ENCODE measurements at regions of chr1 and their contacts with region 1.

Region 1: GRCh38 chr1:31715087-31715872 is 11.5 kb upstream of the COL16A1 start:
- DNase-seq: peak in 2 of 3 donors; percentile 31 to 36
- H3K4me3 ChIP-seq: peak overlapping the region in 6 of 7 experiments; percentile 5 to 71 (median 52)
- H3K27ac ChIP-seq: no peak overlapping the region
- H3K4me1 ChIP-seq: peaks cover 0 to 24% (median 13%) of the 10 kb centered on the region in 4 experiments
- H3K27me3 ChIP-seq: peaks cover 0 to 41% (median 15%) of the 10 kb centered on the region in 5 experiments

Region 2: DNA sequence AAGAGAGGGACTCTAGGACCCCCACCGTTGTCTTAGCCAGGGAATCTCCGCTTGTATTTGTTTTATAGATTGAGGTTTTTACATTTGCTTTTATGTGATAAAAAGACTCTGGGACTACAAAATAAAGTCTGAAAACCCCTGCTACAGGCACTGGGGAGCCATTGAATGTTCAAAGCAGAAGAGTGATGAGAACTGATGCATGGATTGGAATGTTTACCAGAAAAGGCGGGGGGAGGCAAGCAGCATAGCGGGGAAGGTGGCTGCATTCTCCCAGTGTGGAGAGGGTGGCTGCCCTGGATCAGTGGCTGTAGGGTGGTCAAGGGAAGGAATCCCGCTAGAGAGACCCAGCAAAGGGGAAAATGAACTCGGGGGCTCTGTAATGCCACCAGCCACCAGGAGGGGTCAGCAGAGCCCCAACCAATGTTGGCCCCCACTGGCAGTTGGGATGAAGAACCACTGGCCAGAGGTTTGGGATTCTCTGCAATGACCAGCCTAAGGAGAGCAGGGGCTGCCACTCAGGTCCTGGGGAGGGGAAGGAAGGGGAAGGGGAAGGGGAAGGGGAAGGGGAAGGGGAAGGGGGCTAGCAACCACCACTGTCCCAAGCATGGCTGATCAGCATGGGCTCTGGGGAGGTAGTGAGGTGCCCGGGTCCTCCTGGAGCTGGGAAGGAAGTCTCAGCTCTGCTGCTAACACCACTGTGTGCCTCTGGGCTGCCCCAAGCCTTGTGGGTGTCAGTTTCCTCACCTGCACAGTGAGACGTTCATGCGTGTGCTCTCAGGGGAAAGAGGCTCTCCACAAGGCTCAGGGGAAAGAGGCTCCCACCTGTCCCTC is 51.4 kb before region 1 on chr1:
- CTCF ChIA-PET with region 1: interaction called, 84 read pairs
- POLR2A ChIA-PET with region 1: no interaction called
- DNase-seq: peak; percentile 14 to 38 (median 15)
- H3K4me3 ChIP-seq: no peak overlapping the region
- H3K27ac ChIP-seq: no peak overlapping the region
- H3K4me1 ChIP-seq: no peaks in the 10 kb centered on the region
- H3K27me3 ChIP-seq: no peaks in the 10 kb centered on the region

Region 3: GRCh38 chr1:31705080-31705866 is 10.0 kb before region 1 on chr1:
- CTCF ChIA-PET with region 1: interaction called, 27 read pairs
- POLR2A ChIA-PET with region 1: interaction called, 3 read pairs
- DNase-seq: peak; percentile 82 to 96 (median 95)
- H3K4me3 ChIP-seq: peak overlapping the region in 3 of 7 experiments; percentile 11 to 40 (median 29)
- H3K27ac ChIP-seq: no peak overlapping the region
- H3K4me1 ChIP-seq: peaks cover 5 to 53% (median 51%) of the 10 kb centered on the region in 4 experiments
- H3K27me3 ChIP-seq: peaks cover 0 to 19% (median 4%) of the 10 kb centered on the region in 5 experiments

Region 4: DNA sequence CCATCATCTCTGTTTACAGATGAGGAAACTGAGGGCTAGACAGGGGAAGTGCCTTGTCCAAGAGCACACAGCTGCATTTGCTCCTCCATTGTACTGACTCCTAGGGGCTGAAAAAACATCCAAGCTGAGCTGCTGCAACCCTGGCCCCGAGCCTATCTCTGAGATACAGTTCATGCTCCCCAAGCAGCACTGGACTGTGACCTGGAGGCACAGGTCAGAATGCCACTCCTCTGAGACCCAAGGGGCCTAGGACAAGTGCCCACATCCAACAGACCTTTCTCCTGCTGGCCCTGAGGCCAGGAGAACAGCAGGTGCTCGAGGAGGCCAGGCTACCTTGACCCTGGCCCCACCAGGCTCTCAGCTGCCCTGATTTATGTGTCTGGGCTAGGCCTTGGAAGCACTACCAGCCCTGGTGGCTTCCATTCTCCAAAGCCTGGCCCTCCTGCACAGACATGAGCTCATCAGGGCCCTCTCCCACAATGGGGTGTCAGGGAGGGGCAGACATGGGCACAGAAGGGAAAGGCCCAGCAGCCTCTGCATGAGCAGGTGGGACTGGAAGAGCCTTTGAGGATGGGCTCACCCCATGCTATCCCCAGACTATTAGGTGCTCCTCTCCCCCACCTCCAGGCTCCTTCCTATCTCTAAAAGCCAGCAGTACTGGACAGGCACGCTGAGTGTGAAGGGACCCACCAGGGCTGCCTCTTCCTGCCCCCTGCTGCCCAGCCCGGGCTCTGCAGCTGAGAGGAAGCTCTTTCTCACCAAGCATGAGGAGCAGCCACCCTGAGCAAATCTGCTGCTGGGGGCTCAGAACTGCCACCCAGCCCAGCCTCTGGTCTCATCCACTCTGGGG is 30.0 kb after region 1 on chr1:
- CTCF ChIA-PET with region 1: interaction called, 22 read pairs
- POLR2A ChIA-PET with region 1: no interaction called
- DNase-seq: peak in 2 of 3 donors; percentile 71 to 72
- H3K4me3 ChIP-seq: no peak overlapping the region
- H3K27ac ChIP-seq: no peak overlapping the region
- H3K4me1 ChIP-seq: peaks cover 0 to 18% (median 9%) of the 10 kb centered on the region in 4 experiments
- H3K27me3 ChIP-seq: no peaks in the 10 kb centered on the region

Region 5: DNA sequence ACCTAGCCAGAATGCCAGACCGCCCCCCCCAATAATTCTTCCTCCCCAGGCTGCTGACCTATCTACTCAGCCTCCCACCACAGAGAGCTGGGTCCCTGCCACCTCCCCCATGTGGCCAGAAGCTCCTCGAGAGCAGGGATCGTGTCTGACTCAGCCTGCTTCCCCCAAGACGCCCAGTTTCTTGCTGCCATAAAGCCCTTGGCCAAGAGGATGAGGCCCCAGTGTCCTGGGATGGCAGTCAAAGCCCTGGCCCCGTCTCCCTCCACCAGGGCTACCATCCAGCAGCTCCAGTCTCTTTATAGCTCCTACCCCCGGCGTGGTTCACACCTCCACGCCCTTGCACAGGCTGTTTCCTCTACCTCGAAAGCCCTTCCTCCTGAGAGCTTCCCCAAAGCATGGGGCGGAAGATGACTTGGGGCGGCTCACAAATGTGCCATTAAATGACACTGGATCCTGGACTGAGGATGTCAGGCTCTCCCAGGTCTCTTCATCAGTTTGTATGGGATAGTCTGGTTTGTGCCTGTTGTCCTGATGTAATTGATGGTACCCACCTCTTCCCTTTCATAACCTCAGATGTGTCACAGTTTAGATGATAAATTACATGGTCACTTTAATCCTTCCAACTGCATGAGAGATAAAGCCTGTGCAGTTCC is 35.7 kb after region 1 on chr1:
- CTCF ChIA-PET with region 1: interaction called, 22 read pairs
- POLR2A ChIA-PET with region 1: no interaction called
- DNase-seq: peak in 2 of 3 donors; percentile 61 to 70
- H3K4me3 ChIP-seq: no peak overlapping the region
- H3K27ac ChIP-seq: no peak overlapping the region
- H3K4me1 ChIP-seq: peaks cover 0 to 51% (median 33%) of the 10 kb centered on the region in 4 experiments
- H3K27me3 ChIP-seq: no peaks in the 10 kb centered on the region

Region 6: GRCh38 chr1:31769720-31770390 is 54.6 kb after region 1 on chr1:
- CTCF ChIA-PET with region 1: no interaction called
- POLR2A ChIA-PET with region 1: no interaction called
- DNase-seq: no peak
- H3K4me3 ChIP-seq: no peak overlapping the region
- H3K27ac ChIP-seq: no peak overlapping the region
- H3K4me1 ChIP-seq: peaks cover 1 to 28% (median 19%) of the 10 kb centered on the region in 4 experiments
- H3K27me3 ChIP-seq: peaks cover 0 to 49% (median 41%) of the 10 kb centered on the region in 5 experiments